K562 (cell line): ENCODE measurements at regions of chr1 and their contacts with region 1.

Region 1: GRCh38 chr1:165857046-165857801 is 29.8 kb downstream of the UCK2 start:
- DNase-seq: no peak
- ATAC-seq: peak; percentile 40
- H3K4me3 ChIP-seq: no peak overlapping the region
- H3K27ac ChIP-seq: no peak overlapping the region
- H3K4me1 ChIP-seq: peaks cover 12 to 39% of the 10 kb centered on the region in 2 experiments
- H3K27me3 ChIP-seq: no peaks in the 10 kb centered on the region
- CTCF ChIP-seq: no peak
- EP300 ChIP-seq: no peak; the same call in 1 of the 2 replicates
- POLR2A ChIP-seq: no peak
- RAD21 ChIP-seq: 0 out of 4 replicates have a peak, but pooled peaks of 1 of the 2 experiments have one; percentile 8

Region 2: DNA sequence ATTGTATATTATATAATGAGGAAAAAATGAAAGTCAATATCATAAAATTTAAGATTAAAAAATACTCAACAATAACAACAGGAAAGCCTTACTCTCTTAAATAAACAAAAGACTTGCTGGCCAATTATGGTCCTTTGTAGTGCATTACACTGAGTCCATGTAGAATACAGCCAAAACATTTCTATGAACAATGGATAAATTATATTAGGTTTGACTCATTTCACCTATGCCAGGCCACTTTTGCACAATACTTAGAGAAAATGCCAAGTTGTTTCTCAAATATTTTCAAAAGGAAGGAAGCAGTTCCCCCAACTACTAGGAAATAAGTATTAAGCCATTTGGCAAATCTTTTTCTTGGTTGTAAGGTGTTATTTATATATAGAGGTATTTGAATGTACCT is 49.6 kb before region 1 on chr1:
- CTCF ChIA-PET with region 1: no interaction called
- POLR2A ChIA-PET with region 1: no interaction called
- in situ Hi-C with region 1: no loop called
- intact Hi-C with region 1: no loop called
- DNase-seq: no peak
- ATAC-seq: no peak
- H3K4me3 ChIP-seq: no peak overlapping the region
- H3K27ac ChIP-seq: no peak overlapping the region
- H3K4me1 ChIP-seq: no peaks in the 10 kb centered on the region
- H3K27me3 ChIP-seq: no peaks in the 10 kb centered on the region
- CTCF ChIP-seq: no peak
- EP300 ChIP-seq: no peak
- POLR2A ChIP-seq: no peak
- RAD21 ChIP-seq: no peak

Region 3: GRCh38 chr1:165842671-165843129 is 14.5 kb before region 1 on chr1:
- CTCF ChIA-PET with region 1: no interaction called
- POLR2A ChIA-PET with region 1: interaction called, 24 read pairs
- in situ Hi-C with region 1: no loop called
- intact Hi-C with region 1: no loop called
- DNase-seq: peak; percentile 68 to 95 (median 78)
- ATAC-seq: peak; percentile 92
- H3K4me3 ChIP-seq: no peak overlapping the region
- H3K27ac ChIP-seq: peak overlapping the region; percentile 37
- H3K4me1 ChIP-seq: peaks cover 31 to 73% of the 10 kb centered on the region in 2 experiments
- H3K27me3 ChIP-seq: no peaks in the 10 kb centered on the region
- CTCF ChIP-seq: no peak
- EP300 ChIP-seq: peak; percentile 81
- POLR2A ChIP-seq: no peak
- RAD21 ChIP-seq: peak; percentile 13 to 32; a peak in 2 of 4 replicates

Region 4: GRCh38 chr1:165942927-165943597 is 85.8 kb after region 1 on chr1:
- CTCF ChIA-PET with region 1: no interaction called
- POLR2A ChIA-PET with region 1: no interaction called
- in situ Hi-C with region 1: no loop called
- intact Hi-C with region 1: no loop called
- DNase-seq: peak in 1 of 4 experiments; percentile 19
- ATAC-seq: peak; percentile 54; the same call in 2 of the 3 replicates
- H3K4me3 ChIP-seq: no peak overlapping the region
- H3K27ac ChIP-seq: no peak overlapping the region
- H3K4me1 ChIP-seq: peaks cover 0 to 4% of the 10 kb centered on the region in 2 experiments; a peak in 1 of 5 replicates
- H3K27me3 ChIP-seq: peaks cover 34 to 40% of the 10 kb centered on the region in 2 experiments
- CTCF ChIP-seq: no peak
- EP300 ChIP-seq: no peak
- POLR2A ChIP-seq: no peak
- RAD21 ChIP-seq: no peak